Thyroid gland (tissue), 4 donors: ENCODE measurements at regions of chr3 and their contacts with region 1.

Region 1: GRCh38 chr3:151282921-151283320 is 4.6 kb upstream of the P2RY14 start:
- DNase-seq: no peak
- H3K4me3 ChIP-seq: no peak overlapping the region
- H3K27ac ChIP-seq: no peak overlapping the region
- H3K4me1 ChIP-seq: no peaks in the 10 kb centered on the region
- H3K27me3 ChIP-seq: no peaks in the 10 kb centered on the region
- CTCF ChIP-seq: peak in 5 of 6 experiments; percentile 37 to 75 (median 68)
- POLR2A ChIP-seq: no peak

Region 2: GRCh38 chr3:151168269-151169094 is 114.4 kb before region 1 on chr3:
- intact Hi-C with region 1: loop called (anchors 10 kb)
- DNase-seq: peak; percentile 82 to 88
- H3K4me3 ChIP-seq: no peak overlapping the region
- H3K27ac ChIP-seq: no peak overlapping the region
- H3K4me1 ChIP-seq: peaks cover 0 to 9% of the 10 kb centered on the region in 2 donors
- H3K27me3 ChIP-seq: no peaks in the 10 kb centered on the region
- CTCF ChIP-seq: peak; percentile 33 to 77 (median 58)
- POLR2A ChIP-seq: no peak

Region 3: DNA sequence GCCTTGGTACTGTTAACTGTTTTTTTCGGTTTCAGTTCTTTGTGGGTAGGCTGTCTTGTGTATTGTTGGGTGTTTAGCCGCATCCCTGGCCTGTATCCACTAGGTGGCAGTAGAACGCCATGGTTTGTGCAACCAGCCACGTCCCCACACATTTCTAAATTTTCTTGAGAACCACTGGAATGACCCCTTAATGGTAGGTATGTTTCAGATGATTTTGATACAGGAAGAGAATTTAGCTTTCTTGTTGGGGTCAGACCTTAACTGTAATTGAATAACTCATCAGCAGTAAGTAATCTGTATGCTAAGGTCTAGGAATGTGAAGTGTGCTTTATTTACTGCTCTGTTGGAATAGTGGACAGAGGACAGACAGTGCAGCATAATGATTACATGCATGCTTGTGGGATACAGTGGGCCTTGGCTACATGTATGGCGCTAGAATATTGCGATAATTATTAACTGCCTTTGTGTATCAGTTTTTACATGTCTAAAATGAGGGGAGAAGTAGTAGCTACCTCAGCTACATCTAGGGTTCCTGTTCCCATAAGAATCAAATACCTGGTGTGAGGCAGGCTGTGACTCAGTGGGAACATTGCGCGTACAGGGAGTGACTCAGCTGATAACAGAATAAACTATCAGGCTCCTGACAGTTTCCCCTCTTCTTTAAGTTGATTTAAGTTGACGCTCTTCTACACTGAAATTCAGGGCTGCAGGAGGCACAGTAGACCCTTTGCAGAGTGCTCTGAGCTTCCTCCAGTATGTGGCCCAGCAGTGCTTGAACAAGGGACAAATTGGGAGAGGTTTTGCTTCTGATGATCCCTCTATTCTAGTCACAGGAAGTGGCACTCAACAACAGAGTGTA is 54.9 kb before region 1 on chr3:
- intact Hi-C with region 1: loop called (anchors 5 kb)
- DNase-seq: peak; percentile 69 to 75
- H3K4me3 ChIP-seq: no peak overlapping the region
- H3K27ac ChIP-seq: peak overlapping the region in 1 of 3 donors; percentile 39
- H3K4me1 ChIP-seq: peaks cover 7 to 12% of the 10 kb centered on the region in 2 donors
- H3K27me3 ChIP-seq: no peaks in the 10 kb centered on the region
- CTCF ChIP-seq: peak; percentile 76 to 89 (median 82)
- POLR2A ChIP-seq: no peak